ENCODE measurements at regions of chr2 and their contacts with region 1.

Region 1: DNA sequence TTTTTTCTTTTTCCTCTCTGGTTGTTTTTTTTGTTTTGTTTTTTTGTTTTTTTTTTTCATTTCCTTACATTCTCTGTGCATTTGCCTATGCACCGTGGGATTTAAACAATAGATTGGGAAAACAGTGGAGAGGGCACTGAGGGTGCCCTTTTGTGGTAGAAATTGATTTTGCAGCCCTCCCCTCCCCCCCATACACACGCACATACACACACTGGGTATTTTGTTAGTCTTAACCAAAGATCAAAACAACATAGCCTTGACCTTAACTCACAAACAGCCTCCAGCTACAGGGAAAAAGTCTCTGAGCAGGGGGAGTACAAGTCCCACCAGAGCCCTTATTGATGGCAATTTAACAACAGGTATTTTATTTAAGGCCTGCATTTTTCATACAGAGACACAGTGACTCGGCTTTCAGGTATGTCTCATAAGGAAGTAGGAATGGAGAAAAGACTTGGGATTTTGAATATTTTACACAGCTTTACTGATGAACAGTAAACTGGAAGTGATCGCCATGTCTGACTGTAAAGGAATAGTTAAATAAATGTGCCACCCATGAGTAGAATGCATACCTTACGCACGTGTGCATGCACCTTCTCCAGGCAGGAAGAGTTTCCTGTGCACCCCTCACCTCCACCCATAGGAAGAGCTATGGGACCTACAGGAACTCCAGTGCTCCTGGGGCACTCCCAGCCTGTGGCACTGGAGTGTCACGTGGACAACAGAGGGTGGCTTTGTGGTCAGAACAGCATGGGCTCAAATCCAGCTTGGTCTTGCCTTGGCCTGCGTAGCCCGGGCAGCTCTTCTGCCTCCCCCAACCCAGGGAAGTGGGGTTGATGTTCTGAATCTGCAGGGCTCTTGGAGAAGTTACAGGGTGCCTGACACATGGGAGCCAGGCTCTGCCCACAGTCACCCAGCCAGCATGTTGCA is 266.4 kb downstream of the ANAPC1 start:
- DNase-seq: peak in 1 of 2 donors; percentile 16
- ATAC-seq: peak in 7 of 8 donors; percentile 7 to 46 (median 40)
- H3K4me3 ChIP-seq: no peak overlapping the region
- H3K27ac ChIP-seq: peak overlapping the region in 2 of 10 donors; percentile 10 to 70
- H3K4me1 ChIP-seq: peaks cover 3 to 27% (median 13%) of the 10 kb centered on the region in 9 donors
- H3K27me3 ChIP-seq: no peaks in the 10 kb centered on the region
- CTCF ChIP-seq: no peak

Region 2: DNA sequence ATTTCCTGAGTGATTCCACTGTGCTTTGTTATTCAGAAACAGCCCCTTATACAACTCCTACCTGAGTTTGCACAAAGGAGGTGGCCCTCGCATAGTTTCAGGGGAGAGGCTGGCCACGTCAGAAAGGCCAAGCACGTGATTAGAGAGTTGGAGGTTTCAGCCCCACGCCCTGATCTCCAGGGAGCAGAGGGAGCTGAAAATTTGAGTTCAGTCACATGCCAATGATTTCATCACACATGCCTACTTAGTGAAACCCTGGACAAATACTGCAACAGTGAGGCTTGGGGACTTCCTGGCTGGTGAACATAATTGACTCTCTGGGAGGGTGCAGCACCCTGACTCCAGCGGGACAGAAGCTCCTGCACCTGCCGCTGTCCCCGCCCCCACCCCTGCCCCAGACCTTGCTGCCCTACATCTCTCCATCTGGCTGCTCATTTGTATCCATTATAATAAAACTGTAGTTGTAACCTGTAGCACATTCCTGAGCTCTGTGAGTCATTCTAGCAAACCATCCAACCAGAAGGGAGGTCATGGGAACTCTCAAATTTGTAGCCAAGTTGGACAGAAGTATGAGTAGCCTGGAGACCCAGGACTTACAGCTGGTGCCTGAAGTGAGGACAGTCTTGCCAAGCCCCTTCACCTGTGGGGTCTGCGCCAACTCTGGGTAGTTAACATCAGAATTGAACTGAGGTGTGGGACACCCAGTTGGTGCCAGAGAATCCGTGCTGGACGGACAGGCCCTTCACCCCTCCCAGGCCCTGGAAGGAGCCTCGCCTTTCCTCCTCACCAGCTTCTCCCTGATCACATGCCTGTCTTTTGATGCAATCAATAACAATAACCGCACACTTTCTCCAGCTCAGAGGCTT is 42.1 kb after region 1 on chr2:
- intact Hi-C with region 1: loop called in 1 of 10 experiments (anchors 5 kb)
- DNase-seq: peak in 1 of 2 donors; percentile 33
- ATAC-seq: peak in 5 of 8 donors; percentile 21 to 84 (median 56)
- H3K4me3 ChIP-seq: no peak overlapping the region
- H3K27ac ChIP-seq: peak overlapping the region in 1 of 10 donors; percentile 77
- H3K4me1 ChIP-seq: peaks cover 0 to 33% (median 4%) of the 10 kb centered on the region in 9 donors
- H3K27me3 ChIP-seq: no peaks in the 10 kb centered on the region
- CTCF ChIP-seq: no peak

Measured in heart right ventricle (tissue), 16 donors.